Naive thymus-derived CD4-positive, alpha-beta T cell (primary cell): ENCODE measurements at regions of chr7 and their contacts with region 1.

Region 1: DNA sequence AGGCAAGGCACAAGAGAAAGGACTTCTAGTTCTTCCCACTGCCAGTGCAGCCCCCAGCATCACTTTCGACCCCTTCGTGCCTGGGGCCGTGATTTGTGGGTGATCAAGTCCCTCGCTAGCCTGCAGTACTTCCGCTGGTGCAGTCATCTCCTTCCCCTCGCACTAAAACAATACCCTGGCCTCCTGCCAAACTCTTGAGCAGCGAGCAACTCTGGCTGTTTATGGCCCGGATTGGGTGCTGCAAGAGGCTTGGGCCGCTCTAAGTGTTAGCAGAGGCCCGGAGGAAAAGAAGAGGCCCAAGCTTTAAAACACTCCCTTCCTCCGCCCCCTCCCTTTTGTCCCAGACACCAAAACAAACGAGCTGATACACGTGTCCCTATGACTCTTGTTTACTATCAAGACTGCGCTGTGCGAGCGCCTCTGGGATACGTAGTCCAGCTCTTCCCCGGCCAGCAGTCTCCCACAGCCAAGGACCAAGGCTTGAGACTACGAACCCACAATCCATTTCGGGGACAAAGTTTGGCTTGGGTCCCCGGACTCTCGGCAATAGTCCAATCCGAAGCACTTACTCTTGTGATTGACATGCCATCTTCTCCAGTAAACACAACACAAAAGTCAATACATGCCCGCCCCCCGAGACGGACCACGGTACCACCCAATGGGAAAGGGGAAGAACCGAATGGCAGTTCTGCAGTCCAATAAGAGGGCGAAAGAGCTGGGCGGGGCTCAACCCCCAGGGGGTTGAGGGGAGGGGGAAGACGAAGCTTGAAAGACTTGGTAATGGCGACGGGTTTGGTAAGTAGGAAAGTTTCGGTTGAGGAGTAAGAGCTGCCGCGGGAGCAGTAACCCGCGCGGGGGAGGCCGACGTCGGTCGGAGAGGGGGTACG is at the start of gene HBP1:
- DNase-seq: peak; percentile 80 to 100 (median 99)
- ATAC-seq: peak; percentile 87
- H3K4me3 ChIP-seq: peak within 1 kb of the TSS; percentile 84
- H3K4me3 Mint-ChIP-seq: peak within 1 kb of the TSS; percentile 92 to 100 (median 96)
- H3K27ac ChIP-seq: peak within 1 kb of the TSS; percentile 100
- H3K27ac Mint-ChIP-seq: peak within 1 kb of the TSS; percentile 98 to 100 (median 99)
- H3K4me1 ChIP-seq: peaks cover 28 to 35% of the 10 kb centered on the region in 2 donors
- H3K4me1 Mint-ChIP-seq: peaks cover 25 to 50% (median 41%) of the 10 kb centered on the region in 7 donors
- H3K27me3 ChIP-seq: no peaks in the 10 kb centered on the region
- H3K27me3 Mint-ChIP-seq: peaks cover 0 to 28% (median 0%) of the 10 kb centered on the region in 5 donors
- total RNA-seq, gene HBP1: 34.6 to 219 (median 124) TPM

Region 2: DNA sequence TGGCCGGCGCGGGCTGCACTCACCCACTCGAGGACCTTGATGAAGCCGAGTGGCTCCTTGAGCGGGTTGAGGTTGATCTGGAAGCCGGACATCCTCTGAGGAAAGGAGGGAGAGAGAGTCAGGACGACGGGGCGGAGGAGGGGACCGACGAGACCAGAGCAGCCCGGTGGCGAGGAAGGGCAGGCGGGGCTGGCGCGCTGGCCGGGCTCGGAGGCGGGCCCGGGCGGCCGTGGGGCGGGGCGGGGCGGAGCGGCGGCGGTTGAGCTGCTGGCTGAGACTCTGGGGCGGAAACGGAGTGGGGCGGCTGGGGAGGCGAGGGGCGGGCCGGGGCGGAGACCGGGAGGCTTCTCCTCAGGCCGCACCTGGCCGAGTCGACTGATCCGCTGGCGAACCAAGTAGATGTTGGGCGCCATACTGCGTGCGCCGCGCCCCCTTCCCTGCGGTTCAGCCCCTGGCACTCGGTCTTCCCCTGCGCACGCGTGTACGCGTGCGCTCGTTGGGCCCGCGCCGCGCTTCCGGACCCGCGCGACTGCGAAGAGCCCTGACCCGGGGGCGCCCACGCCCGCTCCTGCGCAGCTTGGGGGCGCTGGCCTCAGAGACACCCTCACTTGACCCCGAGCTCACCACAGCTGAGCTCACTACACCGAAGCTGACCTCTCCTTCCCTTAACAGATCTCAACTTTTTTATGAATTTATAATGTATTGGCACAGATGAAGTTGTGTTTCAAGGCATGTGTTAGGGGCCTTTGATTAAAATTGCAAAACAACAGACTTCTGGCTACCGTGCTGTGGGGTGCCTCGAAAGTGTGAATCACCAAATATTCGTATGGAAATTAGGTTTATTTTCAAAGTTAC is 1056.1 kb before region 1 on chr7 and contains the start of gene SYPL1:
- CTCF ChIA-PET with region 1: no interaction called
- POLR2A ChIA-PET with region 1: interaction called, 3 read pairs
- intact Hi-C with region 1: loop called (anchors 1 kb)
- DNase-seq: peak; percentile 91 to 95 (median 93)
- ATAC-seq: peak; percentile 93
- H3K4me3 ChIP-seq: peak within 1 kb of the TSS; percentile 70
- H3K4me3 Mint-ChIP-seq: peak within 1 kb of the TSS; percentile 78 to 97 (median 92)
- H3K27ac ChIP-seq: peak within 1 kb of the TSS; percentile 83
- H3K27ac Mint-ChIP-seq: peak within 1 kb of the TSS; percentile 90 to 99 (median 96)
- H3K4me1 ChIP-seq: peaks cover 14 to 64% of the 10 kb centered on the region in 2 donors
- H3K4me1 Mint-ChIP-seq: peaks cover 45 to 82% (median 71%) of the 10 kb centered on the region in 7 donors
- H3K27me3 ChIP-seq: no peaks in the 10 kb centered on the region
- H3K27me3 Mint-ChIP-seq: peaks cover 0 to 4% (median 0%) of the 10 kb centered on the region in 5 donors
- total RNA-seq, gene SYPL1: 37.5 to 54.0 (median 46.6) TPM

Region 3: DNA sequence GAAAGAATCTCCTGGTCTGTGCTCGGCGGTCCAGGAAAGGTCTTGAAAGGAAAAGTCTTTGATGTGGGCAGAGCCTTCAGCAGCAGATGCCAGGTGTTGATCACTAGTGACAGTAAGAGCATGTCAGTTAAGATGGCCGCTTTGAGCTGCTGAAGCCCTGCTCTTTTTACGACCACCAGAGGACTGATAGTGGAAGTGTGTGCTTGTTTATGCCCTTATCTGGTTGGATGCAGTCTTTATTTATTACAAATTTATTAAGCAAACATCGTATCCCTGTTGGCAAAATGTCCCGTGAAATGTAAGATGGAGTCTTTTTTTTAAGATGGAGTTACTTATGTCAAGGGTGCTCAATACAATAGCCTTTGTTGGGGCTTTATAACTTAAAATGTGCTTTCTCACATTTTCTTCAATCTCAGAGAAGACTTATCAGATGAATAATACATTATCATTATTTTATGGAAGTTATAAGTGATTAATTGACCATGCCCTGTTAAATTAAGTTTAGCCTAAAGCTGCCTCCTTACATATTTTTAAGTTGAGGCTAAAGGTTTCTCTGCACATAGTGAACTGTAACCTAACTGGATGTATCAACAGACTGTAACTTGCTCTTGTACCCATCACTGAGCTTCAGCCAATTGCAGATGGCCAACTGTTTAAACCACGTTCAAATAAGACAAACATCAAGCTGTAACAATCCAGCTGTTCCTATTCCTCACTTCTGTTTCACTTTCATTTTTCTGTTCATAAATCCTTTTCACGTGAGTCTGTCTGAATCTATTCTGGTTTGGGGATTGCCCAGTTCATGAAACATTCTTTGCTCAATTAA is 400.8 kb before region 1 on chr7:
- CTCF ChIA-PET with region 1: no interaction called
- POLR2A ChIA-PET with region 1: interaction called, 13 read pairs
- intact Hi-C with region 1: no loop called
- DNase-seq: peak in 7 of 9 donors; percentile 5 to 38 (median 18)
- ATAC-seq: peak; percentile 71
- H3K4me3 ChIP-seq: peak overlapping the region; percentile 36
- H3K4me3 Mint-ChIP-seq: peak overlapping the region; percentile 58 to 83 (median 74)
- H3K27ac ChIP-seq: no peak overlapping the region
- H3K27ac Mint-ChIP-seq: peak overlapping the region; percentile 26 to 94 (median 56)
- H3K4me1 ChIP-seq: peaks cover 9 to 15% of the 10 kb centered on the region in 2 donors
- H3K4me1 Mint-ChIP-seq: peaks cover 15 to 33% (median 28%) of the 10 kb centered on the region in 7 donors
- H3K27me3 ChIP-seq: no peaks in the 10 kb centered on the region
- H3K27me3 Mint-ChIP-seq: no peaks in the 10 kb centered on the region

Region 4: GRCh38 chr7:107130487-107131225 is 37.8 kb before region 1 on chr7:
- CTCF ChIA-PET with region 1: no interaction called
- POLR2A ChIA-PET with region 1: interaction called, 28 read pairs
- intact Hi-C with region 1: loop called (anchors 1 kb)
- DNase-seq: no peak
- ATAC-seq: no peak
- H3K4me3 ChIP-seq: no peak overlapping the region
- H3K4me3 Mint-ChIP-seq: no peak overlapping the region
- H3K27ac ChIP-seq: no peak overlapping the region
- H3K27ac Mint-ChIP-seq: no peak overlapping the region
- H3K4me1 ChIP-seq: peaks cover 3 to 12% of the 10 kb centered on the region in 2 donors
- H3K4me1 Mint-ChIP-seq: peaks cover 8 to 23% (median 18%) of the 10 kb centered on the region in 7 donors
- H3K27me3 ChIP-seq: no peaks in the 10 kb centered on the region
- H3K27me3 Mint-ChIP-seq: peaks cover 0 to 10% (median 0%) of the 10 kb centered on the region in 5 donors

Region 5: DNA sequence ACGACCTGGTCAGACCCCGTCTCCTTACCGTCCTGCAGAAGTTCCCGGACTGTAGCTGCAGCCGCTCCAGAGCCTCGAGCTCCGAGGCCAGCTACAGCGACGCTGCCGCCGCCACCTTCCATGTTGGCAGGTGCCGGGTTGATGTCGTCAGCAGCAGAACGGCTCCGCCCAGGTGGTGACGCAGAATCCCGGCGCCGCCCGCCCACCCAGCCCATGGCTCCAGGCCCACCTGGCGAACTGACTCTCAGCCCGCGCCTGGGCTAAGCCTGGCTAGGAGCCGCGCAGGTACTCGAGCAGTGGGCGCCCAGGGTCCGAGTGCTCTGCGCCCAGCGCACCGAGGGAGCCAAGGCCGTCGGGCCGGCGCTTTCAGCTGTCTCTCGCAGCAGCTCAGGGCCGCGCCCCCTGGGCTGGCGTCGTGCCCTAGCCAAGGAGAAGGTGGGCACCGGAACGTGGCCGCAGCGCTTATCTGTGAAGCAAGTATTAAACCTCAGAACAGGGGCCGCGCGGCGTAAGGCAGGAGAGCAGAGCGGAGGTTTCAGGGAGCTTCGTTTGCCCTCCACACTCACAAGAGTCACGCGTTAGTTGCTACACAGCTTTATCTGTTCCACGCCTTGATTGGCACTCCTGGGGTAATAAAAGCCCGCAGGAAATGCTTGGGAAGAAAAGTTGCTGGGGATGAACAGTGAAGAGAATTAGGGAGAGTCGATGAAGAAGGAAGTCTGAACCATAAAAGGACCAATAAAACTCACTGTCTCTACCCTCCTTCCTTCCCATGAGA is 395.5 kb after region 1 on chr7 and contains the starts of genes COG5 and DUS4L:
- CTCF ChIA-PET with region 1: no interaction called
- POLR2A ChIA-PET with region 1: interaction called, 17 read pairs
- intact Hi-C with region 1: loop called (anchors 1 kb)
- DNase-seq: peak; percentile 78 to 88 (median 84)
- ATAC-seq: peak; percentile 91
- H3K4me3 ChIP-seq: peak within 1 kb of the TSS; percentile 86
- H3K4me3 Mint-ChIP-seq: peak within 1 kb of the TSS; percentile 76 to 99 (median 91)
- H3K27ac ChIP-seq: peak within 1 kb of the TSS; percentile 98
- H3K27ac Mint-ChIP-seq: peak within 1 kb of the TSS; percentile 87 to 97 (median 93)
- H3K4me1 ChIP-seq: peaks cover 40 to 50% of the 10 kb centered on the region in 2 donors
- H3K4me1 Mint-ChIP-seq: peaks cover 40 to 76% (median 62%) of the 10 kb centered on the region in 7 donors
- H3K27me3 ChIP-seq: no peaks in the 10 kb centered on the region
- H3K27me3 Mint-ChIP-seq: no peaks in the 10 kb centered on the region
- total RNA-seq, gene COG5: 38.3 to 77.0 (median 60.7) TPM
- total RNA-seq, gene DUS4L: 10.0 to 14.1 (median 11.2) TPM

Region 6: DNA sequence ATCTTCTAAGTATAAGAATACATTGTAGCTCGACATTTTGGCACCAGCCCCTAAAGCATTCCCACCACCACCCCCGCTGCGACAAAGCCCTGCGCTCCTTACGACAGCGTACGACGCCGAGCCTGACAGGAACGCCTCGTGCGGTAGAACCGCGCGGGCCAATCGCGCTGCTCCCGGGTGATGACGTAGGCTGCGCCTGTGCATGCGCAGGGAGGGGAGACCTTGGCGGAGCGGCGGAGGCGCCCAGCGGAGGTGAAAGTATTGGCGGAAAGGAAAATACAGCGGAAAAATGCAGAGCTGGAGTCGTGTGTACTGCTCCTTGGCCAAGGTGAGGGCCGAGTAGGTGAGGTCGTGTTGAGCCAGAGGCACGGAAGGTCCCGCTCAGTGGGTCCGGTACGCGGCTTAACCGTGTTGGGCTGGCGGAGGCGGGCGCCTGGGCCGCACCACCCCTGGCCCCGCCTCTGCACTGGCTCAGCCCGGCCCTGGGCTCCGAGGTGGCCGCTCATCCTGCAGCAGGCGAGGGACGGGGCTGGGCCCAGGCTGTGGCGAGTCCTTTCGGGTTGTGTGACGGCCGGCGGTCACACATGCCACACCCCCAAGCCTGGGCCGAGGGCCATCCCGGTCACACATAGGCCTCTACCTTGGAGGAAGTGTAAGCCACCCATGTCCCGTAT is 722.6 kb after region 1 on chr7 and contains the start of gene DLD:
- CTCF ChIA-PET with region 1: no interaction called
- POLR2A ChIA-PET with region 1: interaction called, 11 read pairs
- intact Hi-C with region 1: loop called (anchors 1 kb)
- DNase-seq: peak; percentile 89 to 94 (median 93)
- ATAC-seq: peak; percentile 98
- H3K4me3 ChIP-seq: peak within 1 kb of the TSS; percentile 93
- H3K4me3 Mint-ChIP-seq: peak within 1 kb of the TSS; percentile 89 to 100 (median 97)
- H3K27ac ChIP-seq: peak within 1 kb of the TSS; percentile 97
- H3K27ac Mint-ChIP-seq: peak within 1 kb of the TSS; percentile 94 to 100 (median 98)
- H3K4me1 ChIP-seq: peaks cover 5 to 35% of the 10 kb centered on the region in 2 donors
- H3K4me1 Mint-ChIP-seq: peaks cover 20 to 55% (median 52%) of the 10 kb centered on the region in 7 donors
- H3K27me3 ChIP-seq: no peaks in the 10 kb centered on the region
- H3K27me3 Mint-ChIP-seq: peaks cover 0 to 3% (median 0%) of the 10 kb centered on the region in 5 donors
- total RNA-seq, gene DLD: 44.5 to 69.3 (median 53.7) TPM